ENCODE measurements at regions of chr19 and their contacts with region 1.

Region 1: DNA sequence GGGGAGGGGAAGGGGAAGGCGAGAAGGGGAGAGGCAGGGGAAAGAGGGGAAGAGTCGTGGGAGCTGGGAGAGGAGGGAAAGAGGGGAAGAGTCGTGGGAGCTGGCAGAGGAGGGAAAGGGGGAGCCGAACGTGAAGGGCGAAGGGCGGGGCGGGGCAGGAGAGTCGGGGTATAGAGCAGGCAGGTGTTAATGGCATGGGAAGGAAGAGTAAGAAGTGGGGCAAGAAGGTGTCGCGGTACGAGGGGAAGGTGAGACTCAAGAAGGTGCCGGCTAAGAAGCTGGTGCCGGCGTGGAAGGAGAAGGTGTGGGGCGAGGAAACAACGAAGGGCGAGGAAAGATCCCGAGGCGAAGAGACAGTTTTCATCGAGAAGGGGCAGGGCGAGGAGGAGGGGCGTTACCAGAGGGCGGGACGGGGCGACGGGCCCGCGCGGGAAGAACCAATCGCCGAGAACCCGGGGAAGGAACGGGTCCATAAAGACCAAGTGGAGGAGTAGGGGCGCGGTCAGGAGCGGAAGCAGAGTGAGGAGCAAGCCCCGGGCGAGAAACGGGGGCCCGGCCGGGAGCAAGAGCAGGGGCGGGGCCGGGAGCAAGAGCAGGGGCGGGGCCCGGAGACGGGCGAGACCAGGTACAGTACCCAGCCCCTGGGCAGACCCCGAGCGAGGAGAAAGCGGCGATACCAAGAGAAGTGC is 463 bp downstream of the CATSPERG start:
- DNase-seq: peak; percentile 99
- H3K4me3 ChIP-seq: peak overlapping the region; percentile 52 to 69 (median 64)
- H3K27ac ChIP-seq: peak overlapping the region; percentile 92 to 98 (median 94)
- H3K4me1 ChIP-seq: peaks cover 0 to 17% (median 14%) of the 10 kb centered on the region in 4 donors
- H3K27me3 ChIP-seq: no peaks in the 10 kb centered on the region
- CTCF ChIP-seq: no peak
- EP300 ChIP-seq: no peak
- POLR2A ChIP-seq: peak in 1 of 2 donors; percentile 58

Region 2: DNA sequence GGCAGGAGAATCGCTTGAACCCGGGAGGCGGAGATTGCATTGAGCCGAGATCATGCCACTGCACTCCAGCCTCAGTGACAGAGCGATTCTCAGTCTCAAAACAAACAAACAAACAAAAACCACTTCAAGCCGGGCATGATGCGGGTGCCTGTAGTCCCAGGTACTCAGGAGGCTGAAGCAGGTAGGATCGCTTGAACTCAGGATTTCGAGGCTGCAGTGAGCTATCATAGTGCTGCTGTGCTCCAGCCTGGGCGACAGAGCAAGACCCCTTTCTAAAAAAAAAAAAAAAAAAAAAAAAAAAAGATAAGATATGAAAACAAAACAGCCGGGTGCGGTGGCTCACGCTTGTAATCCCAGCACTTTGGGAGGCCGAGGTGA is 92.8 kb before region 1 on chr19:
- intact Hi-C with region 1: loop called (anchors 1 kb)
- DNase-seq: no peak
- H3K4me3 ChIP-seq: peak overlapping the region in 1 of 4 donors; percentile 4
- H3K27ac ChIP-seq: no peak overlapping the region
- H3K4me1 ChIP-seq: peaks cover 0 to 47% (median 36%) of the 10 kb centered on the region in 4 donors
- H3K27me3 ChIP-seq: no peaks in the 10 kb centered on the region
- CTCF ChIP-seq: no peak
- EP300 ChIP-seq: no peak
- POLR2A ChIP-seq: no peak

Region 3: DNA sequence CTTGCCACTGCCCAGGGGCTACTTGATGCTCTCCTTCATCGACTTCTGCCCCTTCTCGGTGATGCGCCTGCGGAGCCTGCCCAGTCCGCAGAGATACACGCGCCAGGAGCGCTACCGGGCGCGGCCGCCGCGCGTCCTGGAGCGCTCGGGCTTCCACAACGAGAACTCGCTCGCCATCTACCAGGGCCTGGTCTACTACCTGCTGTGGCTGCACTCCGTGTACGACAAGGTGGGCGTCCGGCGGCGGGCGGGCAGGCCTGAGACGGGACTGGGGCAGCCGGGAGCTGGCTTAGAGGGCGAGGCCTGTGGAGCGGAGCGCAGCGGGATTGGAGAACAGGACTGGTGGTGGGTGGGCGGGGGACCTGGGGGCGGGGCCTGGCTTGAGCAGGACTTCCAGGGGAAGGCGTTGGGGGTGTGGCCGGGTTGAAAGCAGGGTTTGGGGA is 25.6 kb after region 1 on chr19:
- intact Hi-C with region 1: no loop called
- DNase-seq: peak; percentile 79
- H3K4me3 ChIP-seq: peak overlapping the region; percentile 22 to 58 (median 49)
- H3K27ac ChIP-seq: peak overlapping the region in 2 of 4 donors; percentile 45 to 60
- H3K4me1 ChIP-seq: peaks cover 2 to 21% (median 20%) of the 10 kb centered on the region in 4 donors
- H3K27me3 ChIP-seq: peaks cover 9 to 79% (median 57%) of the 10 kb centered on the region in 3 donors
- CTCF ChIP-seq: peak in 3 of 4 experiments; percentile 13 to 30 (median 23)
- EP300 ChIP-seq: no peak
- POLR2A ChIP-seq: no peak

Region 4: GRCh38 chr19:38374429-38375176 is 38.5 kb after region 1 on chr19 and contains the start of gene PSMD8:
- intact Hi-C with region 1: loop called (anchors 1 kb)
- DNase-seq: peak; percentile 100
- H3K4me3 ChIP-seq: peak within 1 kb of the TSS; percentile 70 to 84 (median 77)
- H3K27ac ChIP-seq: peak within 1 kb of the TSS; percentile 86 to 93 (median 90)
- H3K4me1 ChIP-seq: peaks cover 0 to 26% (median 22%) of the 10 kb centered on the region in 4 donors
- H3K27me3 ChIP-seq: peaks cover 0 to 4% (median 0%) of the 10 kb centered on the region in 3 donors
- CTCF ChIP-seq: no peak
- EP300 ChIP-seq: peak in 1 of 4 donors; percentile 52
- POLR2A ChIP-seq: peak; percentile 88 to 90
- total RNA-seq, gene PSMD8: 129 to 271 (median 158) TPM

Region 5: GRCh38 chr19:38387550-38388348 is 51.7 kb after region 1 on chr19 and contains the start of gene GGN:
- intact Hi-C with region 1: no loop called
- DNase-seq: peak; percentile 87
- H3K4me3 ChIP-seq: peak within 1 kb of the TSS; percentile 21 to 52 (median 38)
- H3K27ac ChIP-seq: peak within 1 kb of the TSS in 3 of 4 donors; percentile 27 to 77 (median 60)
- H3K4me1 ChIP-seq: peaks cover 0 to 37% (median 33%) of the 10 kb centered on the region in 4 donors
- H3K27me3 ChIP-seq: peaks cover 15 to 82% (median 64%) of the 10 kb centered on the region in 3 donors
- CTCF ChIP-seq: no peak
- EP300 ChIP-seq: no peak
- POLR2A ChIP-seq: no peak
- total RNA-seq, gene GGN: not detected

Measured in sigmoid colon (tissue), 7 donors.